HCT116 (cell line): ENCODE measurements at regions of chr6 and their contacts with region 1.

Region 1: DNA sequence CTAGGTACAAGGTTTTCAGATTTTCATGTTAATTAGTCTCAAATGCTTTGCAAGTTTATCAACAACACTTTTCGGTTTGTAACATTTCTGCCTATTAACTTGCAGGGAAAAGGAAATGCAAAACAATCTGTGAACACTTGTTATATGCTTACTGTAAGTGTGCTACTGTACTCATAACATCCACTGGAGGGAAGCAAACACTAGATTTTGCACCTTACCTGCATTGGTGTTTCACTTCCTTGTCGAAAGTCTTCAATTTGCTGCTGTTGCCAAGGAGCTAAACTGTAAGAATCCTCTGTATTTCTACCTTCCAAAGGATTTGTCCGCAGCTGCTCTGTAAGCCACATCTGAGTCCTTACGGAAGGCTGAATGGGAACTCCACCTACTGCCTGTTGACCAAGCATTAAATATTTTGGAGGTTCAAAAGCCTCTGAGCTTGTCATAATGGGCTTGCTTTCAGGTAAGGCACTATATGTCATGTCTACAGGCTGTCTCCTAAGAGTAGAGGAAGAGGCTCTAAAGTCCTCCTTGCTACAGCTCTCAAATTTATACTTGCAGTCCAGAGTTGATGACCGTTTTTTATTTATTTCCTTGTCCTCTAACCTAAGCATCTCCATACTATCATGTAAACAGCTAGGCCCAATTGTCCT is 17.3 kb downstream of the PLN start:
- DNase-seq: peak; percentile 18
- ATAC-seq: peak; percentile 66
- H3K4me3 ChIP-seq: no peak overlapping the region
- H3K27ac ChIP-seq: no peak overlapping the region
- H3K4me1 ChIP-seq: no peaks in the 10 kb centered on the region
- H3K27me3 ChIP-seq: no peaks in the 10 kb centered on the region
- CTCF ChIP-seq: peak; percentile 46 to 53 (median 50); a peak in 5 of 6 replicates
- POLR2A ChIP-seq: no peak
- RAD21 ChIP-seq: peak; percentile 70

Region 2: GRCh38 chr6:118436482-118436881 is 129.0 kb before region 1 on chr6:
- CTCF ChIA-PET with region 1: no interaction called
- POLR2A ChIA-PET with region 1: no interaction called
- RAD21 ChIA-PET with region 1: no interaction called
- intact Hi-C with region 1: no loop called
- DNase-seq: no peak
- ATAC-seq: no peak
- H3K4me3 ChIP-seq: no peak overlapping the region
- H3K27ac ChIP-seq: no peak overlapping the region
- H3K4me1 ChIP-seq: no peaks in the 10 kb centered on the region
- H3K27me3 ChIP-seq: no peaks in the 10 kb centered on the region
- CTCF ChIP-seq: no peak
- POLR2A ChIP-seq: no peak
- RAD21 ChIP-seq: no peak

Region 3: DNA sequence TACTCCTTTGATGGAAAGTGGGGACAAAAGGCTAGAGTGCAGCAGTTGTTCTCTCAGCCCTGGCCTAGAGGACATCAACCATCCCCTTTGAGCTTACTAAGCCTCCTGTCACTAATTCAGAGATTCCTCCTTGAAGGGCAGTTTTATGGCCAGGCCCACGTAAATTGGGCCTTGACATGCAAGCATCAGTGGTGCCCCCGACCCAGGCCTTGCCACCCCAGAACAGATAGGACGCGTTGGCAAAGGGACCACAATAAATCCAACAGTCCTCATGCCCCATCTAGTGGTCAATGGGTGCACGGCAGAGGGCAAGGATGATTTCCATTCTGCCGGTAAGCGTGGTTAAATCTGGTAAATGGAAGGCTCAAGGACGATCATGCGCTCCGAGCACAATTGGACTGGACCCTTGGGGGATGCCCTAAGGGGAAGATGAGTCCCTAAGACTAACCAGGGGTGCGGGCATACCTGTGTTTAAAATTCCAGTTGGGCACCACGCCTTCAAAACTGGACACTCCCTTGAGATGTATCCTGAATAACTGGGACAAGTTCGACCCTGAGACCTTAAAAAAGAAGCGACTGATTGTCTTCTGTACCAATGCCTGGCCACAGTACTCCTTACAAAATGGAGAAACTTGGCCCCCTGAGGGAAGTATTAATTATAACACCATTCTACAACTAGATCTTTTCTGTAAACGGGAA is 53.4 kb after region 1 on chr6:
- CTCF ChIA-PET with region 1: interaction called, 3 read pairs
- POLR2A ChIA-PET with region 1: no interaction called
- RAD21 ChIA-PET with region 1: no interaction called
- intact Hi-C with region 1: loop called (anchors 1 kb)
- DNase-seq: peak; percentile 12
- ATAC-seq: peak; percentile 96
- H3K4me3 ChIP-seq: no peak overlapping the region
- H3K27ac ChIP-seq: no peak overlapping the region
- H3K4me1 ChIP-seq: no peaks in the 10 kb centered on the region
- H3K27me3 ChIP-seq: no peaks in the 10 kb centered on the region
- CTCF ChIP-seq: peak; percentile 52 to 90 (median 87); a peak in 5 of 6 replicates
- POLR2A ChIP-seq: no peak
- RAD21 ChIP-seq: peak; percentile 75

Region 4: DNA sequence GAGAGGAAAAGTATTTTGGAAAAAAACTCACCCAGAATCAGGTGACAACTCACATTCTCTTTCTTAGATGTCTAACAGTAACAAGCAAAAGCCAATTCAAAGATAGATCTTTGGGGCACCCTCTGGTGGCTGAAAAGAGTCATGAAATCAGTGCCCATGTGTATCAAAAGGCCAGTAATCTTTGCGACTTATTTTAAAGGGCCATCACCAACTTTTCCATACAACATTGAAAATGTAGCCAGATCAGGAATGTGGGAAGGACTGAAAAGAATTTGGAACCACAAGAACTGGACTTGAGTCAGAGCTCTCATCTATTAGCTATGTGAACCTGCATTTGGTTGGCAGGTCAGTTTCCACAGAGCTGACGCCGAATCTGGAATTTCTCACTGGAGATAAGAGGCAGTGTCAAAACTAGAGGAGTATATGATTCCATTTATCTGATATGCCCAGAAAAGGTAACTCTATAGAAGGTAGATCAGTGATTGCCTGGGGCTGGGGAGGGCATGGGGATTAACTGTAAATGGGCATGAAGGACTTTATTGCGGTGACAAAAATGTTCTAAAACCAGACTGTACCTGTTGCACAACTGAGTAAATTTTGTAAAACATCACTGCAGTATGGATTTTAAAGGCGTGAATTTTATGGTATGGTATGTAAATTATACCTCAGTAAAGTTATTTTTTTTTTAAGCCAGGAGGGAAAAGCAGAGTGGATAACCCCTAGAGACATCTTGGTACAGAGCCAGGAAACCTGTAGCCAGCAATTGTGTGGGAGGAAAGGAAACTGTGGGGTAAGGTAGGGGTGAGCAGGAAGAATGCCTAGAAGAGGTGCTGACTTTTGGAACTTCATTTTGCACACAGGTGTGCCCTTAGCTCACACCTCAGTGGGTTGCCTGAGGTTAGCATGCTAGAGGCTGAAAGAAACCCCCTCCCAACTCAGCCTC is 211.4 kb after region 1 on chr6:
- CTCF ChIA-PET with region 1: no interaction called
- POLR2A ChIA-PET with region 1: no interaction called
- RAD21 ChIA-PET with region 1: no interaction called
- intact Hi-C with region 1: loop called (anchors 5 kb)
- DNase-seq: peak; percentile 57
- ATAC-seq: peak; percentile 96
- H3K4me3 ChIP-seq: no peak overlapping the region
- H3K27ac ChIP-seq: no peak overlapping the region
- H3K4me1 ChIP-seq: peaks cover 8% of the 10 kb centered on the region in 2 experiments; a peak in 2 of 4 replicates
- H3K27me3 ChIP-seq: no peaks in the 10 kb centered on the region
- CTCF ChIP-seq: peak; percentile 59 to 84 (median 81); a peak in 5 of 6 replicates
- POLR2A ChIP-seq: no peak
- RAD21 ChIP-seq: peak; percentile 66

Region 5: DNA sequence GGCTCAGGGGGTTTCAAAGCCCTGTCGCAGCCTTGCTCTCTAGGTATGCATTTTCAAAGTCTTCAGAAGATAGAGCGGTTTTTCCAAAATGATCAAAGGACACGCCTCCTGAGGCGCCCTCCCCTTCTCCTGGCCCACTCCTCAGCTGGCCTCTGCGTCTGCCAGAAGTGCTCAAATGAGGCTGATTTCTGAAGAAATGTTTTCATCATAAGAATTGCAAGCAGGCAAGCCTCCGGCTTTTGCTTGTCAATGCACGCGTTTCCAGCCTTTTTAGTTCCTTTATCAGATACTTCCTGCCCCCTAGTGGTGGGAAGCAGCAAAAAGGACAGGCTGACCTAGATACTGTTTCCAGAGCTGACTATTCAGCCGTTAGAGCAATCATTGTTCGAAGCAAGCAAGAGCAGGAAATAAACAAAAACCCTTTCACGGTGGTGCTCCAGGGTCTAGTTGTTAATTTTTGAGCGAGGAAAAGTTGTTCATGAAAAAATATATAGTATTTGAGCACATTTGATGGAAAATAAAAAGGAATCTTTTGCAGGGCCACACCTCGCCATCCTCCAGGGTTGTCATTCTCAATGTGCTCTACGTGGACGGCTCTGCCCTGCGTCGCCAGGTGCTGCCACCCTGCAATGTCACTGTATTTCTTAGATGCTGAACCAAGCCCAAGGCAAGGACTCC is 235.1 kb after region 1 on chr6:
- CTCF ChIA-PET with region 1: interaction called, 8 read pairs
- POLR2A ChIA-PET with region 1: no interaction called
- RAD21 ChIA-PET with region 1: no interaction called
- intact Hi-C with region 1: loop called (anchors 5 kb)
- DNase-seq: peak; percentile 57
- ATAC-seq: peak; percentile 89
- H3K4me3 ChIP-seq: no peak overlapping the region
- H3K27ac ChIP-seq: no peak overlapping the region
- H3K4me1 ChIP-seq: peaks cover 0 to 10% of the 10 kb centered on the region in 2 experiments; a peak in 3 of 4 replicates
- H3K27me3 ChIP-seq: no peaks in the 10 kb centered on the region
- CTCF ChIP-seq: peak; percentile 54 to 95 (median 92); a peak in 5 of 6 replicates
- POLR2A ChIP-seq: no peak
- RAD21 ChIP-seq: peak; percentile 72

Region 6: GRCh38 chr6:118893807-118894424 is 328.5 kb after region 1 on chr6 and contains the start of gene ASF1A:
- CTCF ChIA-PET with region 1: interaction called, 3 read pairs
- POLR2A ChIA-PET with region 1: no interaction called
- RAD21 ChIA-PET with region 1: no interaction called
- intact Hi-C with region 1: loop called (anchors 10 kb)
- DNase-seq: peak; percentile 96
- ATAC-seq: peak; percentile 87
- H3K4me3 ChIP-seq: peak within 1 kb of the TSS; percentile 56 to 93
- H3K27ac ChIP-seq: peak within 1 kb of the TSS; percentile 85
- H3K4me1 ChIP-seq: peaks cover 12 to 21% of the 10 kb centered on the region in 2 experiments
- H3K27me3 ChIP-seq: no peaks in the 10 kb centered on the region
- CTCF ChIP-seq: peak; percentile 44 to 58 (median 57); a peak in 4 of 6 replicates
- POLR2A ChIP-seq: peak; percentile 92
- RAD21 ChIP-seq: peak; percentile 52
- total RNA-seq, gene ASF1A: 23.3 TPM